GM12878 (cell line): ENCODE measurements at regions of chr5 and their contacts with region 1.

Region 1: GRCh38 chr5:118987988-118988865 is at the start of gene DTWD2:
- DNase-seq: peak; percentile 81
- ATAC-seq: peak; percentile 96
- H3K4me3 ChIP-seq: peak within 1 kb of the TSS; percentile 74
- H3K27ac ChIP-seq: peak within 1 kb of the TSS; percentile 75
- H3K4me1 ChIP-seq: peaks cover 7% of the 10 kb centered on the region; the same call in 1 of the 2 replicates
- H3K27me3 ChIP-seq: no peaks in the 10 kb centered on the region
- CTCF ChIP-seq: peak; percentile 71 to 96 (median 92)
- EP300 ChIP-seq: 0 out of 4 replicates have a peak, but pooled peaks have one; percentile 8
- POLR2A ChIP-seq: peak; percentile 83
- RAD21 ChIP-seq: peak; percentile 86
- polyA plus RNA-seq, gene DTWD2: 0.93 to 1.0 TPM

Region 2: GRCh38 chr5:118937393-118938061 is 50.7 kb before region 1 on chr5:
- CTCF ChIA-PET with region 1: no interaction called
- POLR2A ChIA-PET with region 1: no interaction called
- RAD21 ChIA-PET with region 1: no interaction called
- SMC1A ChIA-PET with region 1: no interaction called
- in situ Hi-C with region 1: no loop called
- intact Hi-C with region 1: no loop called
- DNase-seq: peak; percentile 5
- ATAC-seq: peak; percentile 89
- H3K4me3 ChIP-seq: no peak overlapping the region
- H3K27ac ChIP-seq: no peak overlapping the region
- H3K4me1 ChIP-seq: no peaks in the 10 kb centered on the region
- H3K27me3 ChIP-seq: no peaks in the 10 kb centered on the region
- CTCF ChIP-seq: no peak
- EP300 ChIP-seq: no peak
- POLR2A ChIP-seq: no peak
- RAD21 ChIP-seq: no peak

Region 3: DNA sequence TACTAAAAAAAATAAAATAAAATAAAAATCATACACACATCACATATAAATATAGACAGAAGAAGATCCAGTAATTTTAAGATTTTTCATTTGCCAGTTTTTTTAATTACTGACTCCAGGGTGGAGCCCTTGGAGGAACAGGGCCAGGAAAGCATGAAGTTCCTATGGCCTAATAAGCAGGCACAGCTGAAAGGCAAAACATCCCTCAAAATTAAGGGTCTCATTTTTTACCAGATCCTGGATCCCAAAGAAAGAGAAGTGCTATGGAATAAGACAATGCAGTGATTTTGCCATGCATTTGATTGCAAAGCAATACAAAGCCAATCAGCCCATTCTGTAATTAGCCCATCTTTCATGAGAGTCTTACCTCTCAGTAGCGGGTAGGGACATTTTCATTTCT is 11.5 kb after region 1 on chr5:
- CTCF ChIA-PET with region 1: interaction called, 11 read pairs
- POLR2A ChIA-PET with region 1: no interaction called
- RAD21 ChIA-PET with region 1: interaction called, 3 read pairs
- SMC1A ChIA-PET with region 1: interaction called, 5 read pairs
- in situ Hi-C with region 1: no loop called
- intact Hi-C with region 1: no loop called
- DNase-seq: no peak
- ATAC-seq: no peak
- H3K4me3 ChIP-seq: no peak overlapping the region
- H3K27ac ChIP-seq: no peak overlapping the region
- H3K4me1 ChIP-seq: no peaks in the 10 kb centered on the region
- H3K27me3 ChIP-seq: no peaks in the 10 kb centered on the region
- CTCF ChIP-seq: no peak
- EP300 ChIP-seq: no peak
- POLR2A ChIP-seq: no peak
- RAD21 ChIP-seq: no peak

Region 4: DNA sequence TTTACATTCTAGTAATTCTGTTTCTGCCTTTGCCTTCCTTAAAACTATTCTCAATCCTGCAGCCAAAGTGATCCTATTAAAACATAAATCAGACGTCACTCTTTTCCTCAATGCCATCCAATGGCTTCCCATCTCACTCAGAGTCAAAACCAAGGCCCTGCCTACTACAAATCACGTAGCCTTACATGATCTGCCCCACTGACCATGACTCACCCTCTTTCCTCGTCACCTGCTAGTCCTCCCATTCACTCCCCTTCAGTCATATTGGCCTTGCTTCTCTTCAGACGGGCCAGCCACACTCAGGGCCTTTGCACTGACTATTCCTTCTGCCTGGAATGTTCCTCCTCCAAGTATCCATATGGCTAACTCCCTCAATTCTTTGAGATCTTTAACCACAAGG is 43.7 kb after region 1 on chr5:
- CTCF ChIA-PET with region 1: interaction called, 10 read pairs
- POLR2A ChIA-PET with region 1: no interaction called
- RAD21 ChIA-PET with region 1: interaction called, 6 read pairs
- SMC1A ChIA-PET with region 1: interaction called, 5 read pairs
- in situ Hi-C with region 1: no loop called
- intact Hi-C with region 1: loop called (anchors 5 kb)
- DNase-seq: peak; percentile 73
- ATAC-seq: peak; percentile 93
- H3K4me3 ChIP-seq: peak overlapping the region; percentile 29; the same call in 1 of the 2 replicates
- H3K27ac ChIP-seq: peak overlapping the region; percentile 95
- H3K4me1 ChIP-seq: peaks cover 39% of the 10 kb centered on the region
- H3K27me3 ChIP-seq: no peaks in the 10 kb centered on the region
- CTCF ChIP-seq: no peak
- EP300 ChIP-seq: no peak
- POLR2A ChIP-seq: peak; percentile 51; the same call in 1 of the 2 replicates
- RAD21 ChIP-seq: no peak

Region 5: DNA sequence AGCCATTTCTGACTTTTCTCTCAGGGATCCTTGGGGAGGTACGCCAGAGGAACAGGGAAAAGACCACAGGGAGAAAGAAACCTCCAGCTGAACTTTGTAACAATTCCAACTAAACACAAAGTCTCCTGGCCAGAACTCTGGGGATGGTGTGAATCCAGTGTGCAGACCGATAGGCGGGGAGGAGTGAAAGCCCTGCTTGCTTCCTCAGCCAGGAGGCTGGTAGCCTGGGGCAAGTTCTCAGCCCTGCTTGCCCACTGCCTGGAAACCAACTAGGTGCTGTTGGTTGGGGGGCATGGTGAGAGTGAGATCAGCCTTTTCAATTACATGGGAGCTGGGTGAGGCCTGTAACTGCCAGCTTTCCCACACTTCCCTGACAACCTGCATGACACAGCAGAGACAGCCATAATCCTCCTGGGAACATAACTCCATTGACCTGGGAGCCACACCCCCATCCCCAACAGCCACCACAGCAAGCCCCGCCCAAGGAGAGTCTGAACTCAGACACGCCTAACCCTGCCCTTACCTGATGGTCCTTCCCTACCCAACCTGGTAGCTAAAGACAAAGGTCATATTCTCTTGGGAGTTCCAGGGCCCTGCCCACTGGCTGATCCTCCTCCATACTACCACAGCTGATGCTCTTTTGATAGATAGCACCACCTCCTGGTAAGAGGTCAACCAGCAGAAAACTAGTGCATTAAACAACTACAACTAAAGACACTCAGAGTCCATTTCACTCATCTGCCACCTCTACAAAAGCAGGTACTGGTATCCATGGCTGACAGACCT is 267.5 kb after region 1 on chr5:
- CTCF ChIA-PET with region 1: interaction called, 45 read pairs
- POLR2A ChIA-PET with region 1: no interaction called
- RAD21 ChIA-PET with region 1: interaction called, 20 read pairs
- SMC1A ChIA-PET with region 1: interaction called, 23 read pairs
- in situ Hi-C with region 1: no loop called
- intact Hi-C with region 1: loop called (anchors 1 kb)
- DNase-seq: no peak
- ATAC-seq: peak; percentile 84
- H3K4me3 ChIP-seq: no peak overlapping the region
- H3K27ac ChIP-seq: no peak overlapping the region
- H3K4me1 ChIP-seq: no peaks in the 10 kb centered on the region
- H3K27me3 ChIP-seq: no peaks in the 10 kb centered on the region
- CTCF ChIP-seq: peak in 2 of 3 experiments; percentile 30 to 31; a peak in 3 of 6 replicates
- EP300 ChIP-seq: no peak
- POLR2A ChIP-seq: no peak
- RAD21 ChIP-seq: peak; percentile 49

Region 6: GRCh38 chr5:119340597-119341218 is 352.5 kb after region 1 on chr5:
- CTCF ChIA-PET with region 1: interaction called, 3 read pairs
- POLR2A ChIA-PET with region 1: interaction called, 7 read pairs
- RAD21 ChIA-PET with region 1: interaction called, 6 read pairs
- SMC1A ChIA-PET with region 1: interaction called, 5 read pairs
- in situ Hi-C with region 1: no loop called
- intact Hi-C with region 1: loop called (anchors 2 kb)
- DNase-seq: peak; percentile 91
- ATAC-seq: peak; percentile 73
- H3K4me3 ChIP-seq: peak overlapping the region; percentile 78
- H3K27ac ChIP-seq: peak overlapping the region; percentile 100
- H3K4me1 ChIP-seq: peaks cover 69% of the 10 kb centered on the region
- H3K27me3 ChIP-seq: no peaks in the 10 kb centered on the region
- CTCF ChIP-seq: 0 out of 6 replicates have a peak, but pooled peaks of 1 of the 3 experiments have one; percentile 20
- EP300 ChIP-seq: peak; percentile 55 to 86; a peak in 3 of 4 replicates
- POLR2A ChIP-seq: peak; percentile 50; the same call in 1 of the 2 replicates
- RAD21 ChIP-seq: peak; percentile 30; the same call in 1 of the 2 replicates

Region 7: GRCh38 chr5:119743927-119744326 is 755.7 kb after region 1 on chr5:
- CTCF ChIA-PET with region 1: interaction called, 4 read pairs
- POLR2A ChIA-PET with region 1: no interaction called
- RAD21 ChIA-PET with region 1: no interaction called
- SMC1A ChIA-PET with region 1: no interaction called
- in situ Hi-C with region 1: loop called (anchors 10 kb)
- intact Hi-C with region 1: loop called (anchors 1 kb)
- DNase-seq: peak; percentile 48
- ATAC-seq: peak; percentile 93
- H3K4me3 ChIP-seq: no peak overlapping the region
- H3K27ac ChIP-seq: no peak overlapping the region
- H3K4me1 ChIP-seq: no peaks in the 10 kb centered on the region
- H3K27me3 ChIP-seq: no peaks in the 10 kb centered on the region; a peak in 1 of 4 replicates
- CTCF ChIP-seq: peak; percentile 62 to 73 (median 73); a peak in 5 of 6 replicates
- EP300 ChIP-seq: no peak
- POLR2A ChIP-seq: no peak
- RAD21 ChIP-seq: peak; percentile 76